AG04449 (cell line): ENCODE measurements at regions of chr16 and their contacts with region 1.

Region 1: GRCh38 chr16:86016201-86016871 is 117.4 kb downstream of the IRF8 start:
- DNase-seq: peak; percentile 4
- H3K4me3 ChIP-seq: no peak overlapping the region
- CTCF ChIP-seq: peak; percentile 64

Region 2: GRCh38 chr16:85305996-85306792 is 710.1 kb before region 1 on chr16:
- CTCF ChIA-PET with region 1: no interaction called
- POLR2A ChIA-PET with region 1: no interaction called
- DNase-seq: no peak
- H3K4me3 ChIP-seq: no peak overlapping the region
- CTCF ChIP-seq: no peak

Region 3: DNA sequence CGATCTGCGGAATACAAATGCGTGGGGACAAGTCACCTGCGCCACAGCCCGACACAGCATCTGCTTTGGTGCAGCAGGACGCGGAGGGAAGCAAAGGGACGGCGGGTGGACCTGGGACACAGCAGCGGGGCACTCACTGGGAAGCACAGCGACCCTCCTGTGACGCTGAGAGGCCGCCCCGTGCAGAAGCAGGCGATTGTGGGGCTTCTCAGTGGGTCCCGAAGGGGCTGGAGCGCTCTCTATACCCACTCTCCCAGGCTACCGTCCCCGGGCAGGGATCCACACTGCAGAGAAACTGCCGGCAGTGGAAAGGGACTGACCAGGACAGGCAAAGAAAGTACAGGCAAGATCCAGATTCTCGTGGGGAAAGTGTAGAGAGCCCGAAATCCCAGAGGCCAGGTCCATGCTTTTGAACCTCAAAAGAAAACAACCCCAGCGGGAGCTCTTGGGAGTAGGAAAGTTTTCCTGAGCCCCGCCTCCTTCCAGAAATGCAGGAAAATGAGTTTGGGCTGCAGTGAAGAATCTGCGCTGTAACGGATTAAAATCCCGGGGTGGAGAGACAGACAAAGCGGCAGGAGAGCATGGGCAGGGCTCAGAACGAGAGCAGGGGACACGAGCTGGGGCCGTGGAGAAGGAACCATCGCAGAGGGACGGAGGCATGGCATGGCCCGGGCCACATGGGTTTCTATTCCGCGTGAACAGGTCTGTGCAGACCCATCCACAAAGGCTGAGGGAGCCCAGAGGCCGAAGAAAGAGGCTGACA is 204.1 kb before region 1 on chr16:
- CTCF ChIA-PET with region 1: interaction called, 316 read pairs
- POLR2A ChIA-PET with region 1: no interaction called
- DNase-seq: no peak
- H3K4me3 ChIP-seq: peak overlapping the region; percentile 6; the same call in 1 of the 2 replicates
- CTCF ChIP-seq: no peak

Region 4: DNA sequence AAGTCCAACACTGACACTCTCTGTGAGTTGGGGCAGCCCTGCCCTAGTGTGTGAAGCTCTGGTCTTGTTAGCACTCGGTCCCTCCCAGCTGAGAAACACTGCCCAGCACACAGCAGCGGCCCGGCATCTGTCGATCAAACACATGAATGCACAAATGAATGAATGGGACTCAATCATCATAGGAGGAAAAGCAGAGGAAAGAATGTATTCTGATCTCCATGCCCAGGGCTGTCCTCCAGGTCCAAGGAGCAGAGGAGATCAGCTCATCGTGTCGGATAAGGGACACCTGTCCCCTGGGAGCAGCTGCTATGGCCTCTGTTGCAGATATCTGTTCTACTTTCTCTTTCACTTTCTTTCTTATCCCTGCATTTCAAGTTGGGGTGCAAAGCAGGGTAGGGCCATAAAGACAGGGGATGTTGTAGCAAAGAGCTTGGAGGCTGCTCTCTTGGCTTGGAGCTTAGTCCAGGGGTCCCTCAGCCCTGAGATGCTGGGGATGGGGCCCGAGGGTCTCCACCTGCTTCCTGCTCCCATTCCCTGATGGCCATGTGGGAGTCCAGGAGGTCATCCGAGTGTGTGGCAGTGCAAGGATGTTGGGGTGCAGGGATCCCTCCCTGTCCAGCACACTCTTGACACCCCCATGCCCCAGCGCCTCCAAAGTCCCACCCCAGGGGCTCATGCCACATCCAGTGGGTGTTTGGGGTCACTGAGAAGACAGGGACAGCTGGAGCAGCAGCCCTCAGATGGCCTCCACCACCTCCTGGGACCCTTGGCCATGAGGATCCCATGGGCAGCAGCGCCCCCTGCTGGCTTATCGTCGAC is 29.2 kb before region 1 on chr16:
- CTCF ChIA-PET with region 1: interaction called, 10 read pairs
- POLR2A ChIA-PET with region 1: no interaction called
- DNase-seq: no peak
- H3K4me3 ChIP-seq: no peak overlapping the region
- CTCF ChIP-seq: peak; percentile 40

Region 5: GRCh38 chr16:86029131-86029741 is 12.9 kb after region 1 on chr16:
- CTCF ChIA-PET with region 1: interaction called, 31 read pairs
- POLR2A ChIA-PET with region 1: no interaction called
- DNase-seq: peak; percentile 7
- H3K4me3 ChIP-seq: no peak overlapping the region
- CTCF ChIP-seq: no peak

Region 6: GRCh38 chr16:86059253-86060171 is 43.2 kb after region 1 on chr16:
- CTCF ChIA-PET with region 1: no interaction called
- POLR2A ChIA-PET with region 1: no interaction called
- DNase-seq: no peak
- H3K4me3 ChIP-seq: no peak overlapping the region
- CTCF ChIP-seq: no peak

Region 7: DNA sequence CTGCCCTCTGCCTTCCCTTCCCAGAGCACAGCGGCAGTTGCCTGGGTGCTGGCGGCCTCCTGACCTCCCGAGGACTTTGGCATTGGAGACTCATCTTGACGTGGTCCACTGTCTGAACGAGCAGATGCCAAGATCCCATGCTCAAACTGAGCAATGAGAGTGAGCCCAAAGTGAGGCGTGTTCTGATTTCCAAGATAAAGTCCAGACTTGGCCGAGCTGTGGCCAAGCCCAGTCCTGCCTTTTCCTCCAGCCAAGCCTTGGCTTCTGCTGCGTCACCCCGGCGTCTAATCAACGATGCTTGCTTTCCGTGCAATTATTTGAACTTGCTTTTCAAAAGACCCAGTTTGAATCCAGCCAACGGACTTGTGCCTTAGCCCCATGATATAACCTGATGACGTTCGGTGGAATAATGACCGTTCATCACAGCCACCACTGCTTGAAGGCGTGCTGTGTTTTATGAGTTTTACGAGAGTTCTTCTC is 61.8 kb after region 1 on chr16:
- CTCF ChIA-PET with region 1: no interaction called
- POLR2A ChIA-PET with region 1: no interaction called
- DNase-seq: no peak
- H3K4me3 ChIP-seq: no peak overlapping the region
- CTCF ChIP-seq: no peak

Region 8: GRCh38 chr16:86107215-86107825 is 91.0 kb after region 1 on chr16:
- CTCF ChIA-PET with region 1: no interaction called
- POLR2A ChIA-PET with region 1: no interaction called
- DNase-seq: no peak
- H3K4me3 ChIP-seq: no peak overlapping the region
- CTCF ChIP-seq: no peak